Activated CD4-positive, alpha-beta memory T cell treated with anti-CD3 and anti-CD28 coated beads for 36 hours (primary cell): ENCODE measurements at regions of chr17 and their contacts with region 1.

Region 1: GRCh38 chr17:13031718-13032350 is 14.0 kb upstream of the ELAC2 start:
- DNase-seq: peak; percentile 63
- H3K4me3 Mint-ChIP-seq: no peak overlapping the region
- H3K27ac Mint-ChIP-seq: no peak overlapping the region
- H3K4me1 Mint-ChIP-seq: peaks cover 7% of the 10 kb centered on the region
- H3K27me3 Mint-ChIP-seq: peaks cover 6% of the 10 kb centered on the region

Region 2: GRCh38 chr17:12959441-12959840 is 72.4 kb before region 1 on chr17:
- CTCF ChIA-PET with region 1: no interaction called
- POLR2A ChIA-PET with region 1: no interaction called
- intact Hi-C with region 1: no loop called
- DNase-seq: no peak
- H3K4me3 Mint-ChIP-seq: no peak overlapping the region
- H3K27ac Mint-ChIP-seq: no peak overlapping the region
- H3K4me1 Mint-ChIP-seq: no peaks in the 10 kb centered on the region
- H3K27me3 Mint-ChIP-seq: peaks cover 3% of the 10 kb centered on the region

Region 3: DNA sequence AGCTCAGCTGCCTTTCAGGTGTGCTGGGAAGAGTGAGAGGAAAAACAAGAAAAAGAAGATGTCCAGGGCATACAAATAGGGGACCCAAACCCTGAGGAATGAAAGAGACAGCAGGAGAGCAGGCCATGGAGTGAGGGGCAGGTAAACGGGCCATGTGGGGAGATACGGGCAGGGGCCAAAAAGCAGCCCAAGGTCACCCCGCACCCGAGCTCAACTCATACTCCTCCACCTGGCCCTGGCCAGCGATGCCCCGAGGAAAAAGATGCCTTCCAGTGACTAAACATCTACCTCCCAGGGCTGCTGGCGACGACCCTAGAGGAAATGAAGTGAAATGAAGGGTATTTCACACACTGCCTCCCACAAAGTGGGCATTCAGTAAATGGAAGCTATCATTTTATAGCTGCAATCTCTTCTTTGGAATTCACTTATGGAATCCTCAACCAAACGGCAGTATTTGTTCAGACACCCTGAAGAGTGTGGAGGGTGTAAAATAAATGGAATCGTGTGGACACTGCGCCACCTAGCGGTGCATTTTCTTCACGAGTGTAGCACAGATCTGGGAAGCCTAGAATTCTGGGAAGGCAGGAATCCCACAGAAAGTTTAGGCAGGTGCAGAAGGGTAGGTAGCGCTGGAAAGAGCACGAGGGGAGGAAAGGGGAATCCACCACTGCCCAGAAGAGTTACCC is 28.9 kb before region 1 on chr17:
- CTCF ChIA-PET with region 1: interaction called, 38 read pairs
- POLR2A ChIA-PET with region 1: no interaction called
- intact Hi-C with region 1: no loop called
- DNase-seq: peak; percentile 57
- H3K4me3 Mint-ChIP-seq: no peak overlapping the region
- H3K27ac Mint-ChIP-seq: no peak overlapping the region
- H3K4me1 Mint-ChIP-seq: peaks cover 2% of the 10 kb centered on the region
- H3K27me3 Mint-ChIP-seq: no peaks in the 10 kb centered on the region

Region 4: DNA sequence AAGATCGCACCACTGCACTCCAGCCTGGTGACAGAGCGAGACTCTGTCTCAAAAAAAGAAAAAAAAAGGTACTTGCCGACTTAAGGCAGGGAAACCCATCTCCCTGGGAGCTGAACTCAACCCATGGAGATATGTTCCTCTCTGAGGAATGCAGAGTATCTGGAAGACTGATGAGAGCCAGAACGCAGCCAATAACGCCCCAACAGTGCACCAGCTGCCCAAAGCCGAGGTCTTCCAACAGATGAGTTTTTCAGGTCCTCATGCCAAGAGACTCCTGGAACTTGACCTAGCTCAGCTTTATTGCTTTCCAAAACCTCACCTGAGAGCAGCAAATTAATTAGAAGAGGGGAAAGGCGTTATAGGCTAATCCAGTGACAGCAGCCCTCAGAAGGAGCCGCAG is 23.4 kb before region 1 on chr17:
- CTCF ChIA-PET with region 1: interaction called, 174 read pairs
- POLR2A ChIA-PET with region 1: no interaction called
- intact Hi-C with region 1: no loop called
- DNase-seq: no peak
- H3K4me3 Mint-ChIP-seq: no peak overlapping the region
- H3K27ac Mint-ChIP-seq: no peak overlapping the region
- H3K4me1 Mint-ChIP-seq: peaks cover 2% of the 10 kb centered on the region
- H3K27me3 Mint-ChIP-seq: no peaks in the 10 kb centered on the region

Region 5: DNA sequence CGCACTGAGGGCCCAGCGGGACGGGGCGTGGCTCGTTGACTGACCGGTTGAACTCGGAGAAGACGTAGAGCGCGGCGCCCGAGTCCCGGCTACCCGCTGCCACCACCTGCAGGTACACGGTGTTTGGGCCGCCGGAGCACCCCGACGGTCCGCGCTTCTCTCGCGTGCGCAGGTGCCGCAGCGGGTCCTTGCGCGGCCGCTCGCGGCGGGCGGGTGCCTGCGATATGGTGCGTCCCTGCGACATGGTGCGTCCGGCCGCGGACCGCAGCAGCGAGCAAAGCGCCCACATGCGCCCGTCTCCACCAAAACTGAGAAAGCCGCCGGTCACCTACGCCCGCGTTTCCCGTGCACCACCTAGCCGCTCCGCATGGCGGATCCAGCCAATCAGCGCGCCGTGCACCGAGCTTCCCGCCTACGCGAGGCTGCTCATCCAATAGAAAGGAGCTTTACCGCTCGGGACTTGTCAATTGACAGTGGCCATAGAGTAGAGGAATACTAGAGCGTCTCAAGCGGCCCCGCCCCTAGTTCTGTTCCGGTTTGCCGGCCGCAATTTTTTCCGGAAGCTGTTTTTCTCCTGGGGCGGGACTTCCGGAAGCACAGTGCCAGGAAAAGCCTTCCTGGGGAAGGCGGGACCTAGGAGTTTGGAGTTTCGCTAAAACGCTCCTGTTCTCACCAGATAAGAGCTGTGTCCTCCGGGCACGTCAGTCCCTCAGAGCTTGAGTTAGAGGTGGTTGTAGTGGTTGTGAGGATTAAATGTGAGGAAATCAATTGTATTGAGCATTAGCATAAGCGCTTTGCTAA is 14.0 kb before region 1 on chr17 and contains the start of gene ELAC2:
- CTCF ChIA-PET with region 1: interaction called, 174 read pairs
- POLR2A ChIA-PET with region 1: interaction called, 4 read pairs
- intact Hi-C with region 1: no loop called
- DNase-seq: peak; percentile 97
- H3K4me3 Mint-ChIP-seq: peak within 1 kb of the TSS; percentile 94
- H3K27ac Mint-ChIP-seq: peak within 1 kb of the TSS; percentile 97
- H3K4me1 Mint-ChIP-seq: peaks cover 26% of the 10 kb centered on the region
- H3K27me3 Mint-ChIP-seq: no peaks in the 10 kb centered on the region
- total RNA-seq, gene ELAC2: 63.1 to 64.2 TPM

Region 6: GRCh38 chr17:13047011-13047606 is 15.3 kb after region 1 on chr17:
- CTCF ChIA-PET with region 1: interaction called, 40 read pairs
- POLR2A ChIA-PET with region 1: no interaction called
- intact Hi-C with region 1: no loop called
- DNase-seq: no peak
- H3K4me3 Mint-ChIP-seq: no peak overlapping the region
- H3K27ac Mint-ChIP-seq: no peak overlapping the region
- H3K4me1 Mint-ChIP-seq: no peaks in the 10 kb centered on the region
- H3K27me3 Mint-ChIP-seq: peaks cover 8% of the 10 kb centered on the region

Region 7: GRCh38 chr17:13337864-13338371 is 306.1 kb after region 1 on chr17:
- CTCF ChIA-PET with region 1: interaction called, 5 read pairs
- POLR2A ChIA-PET with region 1: no interaction called
- intact Hi-C with region 1: loop called (anchors 5 kb)
- DNase-seq: peak; percentile 14
- H3K4me3 Mint-ChIP-seq: no peak overlapping the region
- H3K27ac Mint-ChIP-seq: no peak overlapping the region
- H3K4me1 Mint-ChIP-seq: peaks cover 4% of the 10 kb centered on the region
- H3K27me3 Mint-ChIP-seq: peaks cover 33% of the 10 kb centered on the region